H1 (cell line): ENCODE measurements at regions of chr4 and their contacts with region 1.

Region 1: GRCh38 chr4:186719925-186720694 is 3.5 kb downstream of the FAT1 start:
- DNase-seq: no peak
- H3K4me3 ChIP-seq: 0 out of 8 replicates have a peak overlapping the region, but pooled peaks of 1 of the 4 experiments have one; percentile 99
- H3K27ac ChIP-seq: no peak overlapping the region
- H3K4me1 ChIP-seq: peaks cover 0 to 16% (median 8%) of the 10 kb centered on the region in 4 experiments; a peak in 4 of 7 replicates
- H3K27me3 ChIP-seq: peaks cover 0 to 2% (median 0%) of the 10 kb centered on the region in 4 experiments; a peak in 2 of 7 replicates
- CTCF ChIP-seq: peak in 2 of 3 experiments; percentile 57 to 75; a peak in 2 of 4 replicates
- EP300 ChIP-seq: no peak
- POLR2A ChIP-seq: no peak
- RAD21 ChIP-seq: peak; percentile 85 to 88

Region 2: GRCh38 chr4:186669159-186669731 is 50.9 kb before region 1 on chr4:
- CTCF ChIA-PET with region 1: interaction called, 16 read pairs
- POLR2A ChIA-PET with region 1: no interaction called
- DNase-seq: peak in 1 of 2 experiments; percentile 64
- H3K4me3 ChIP-seq: peak overlapping the region; percentile 23 to 54 (median 34); a peak in 6 of 8 replicates
- H3K27ac ChIP-seq: no peak overlapping the region
- H3K4me1 ChIP-seq: peaks cover 2 to 21% (median 8%) of the 10 kb centered on the region in 4 experiments
- H3K27me3 ChIP-seq: peaks cover 0 to 1% (median 0%) of the 10 kb centered on the region in 4 experiments; a peak in 1 of 7 replicates
- CTCF ChIP-seq: peak in 1 of 3 experiments; percentile 19; a peak in 2 of 4 replicates
- EP300 ChIP-seq: no peak
- POLR2A ChIP-seq: no peak
- RAD21 ChIP-seq: no peak; a peak in 1 of 4 replicates

Region 3: GRCh38 chr4:186701273-186701672 is 18.8 kb before region 1 on chr4:
- CTCF ChIA-PET with region 1: interaction called, 21 read pairs
- POLR2A ChIA-PET with region 1: interaction called, 8 read pairs
- DNase-seq: peak in 1 of 2 experiments; percentile 64
- H3K4me3 ChIP-seq: peak overlapping the region in 2 of 4 experiments; percentile 7 to 23; a peak in 1 of 8 replicates
- H3K27ac ChIP-seq: no peak overlapping the region
- H3K4me1 ChIP-seq: peaks cover 12 to 34% (median 26%) of the 10 kb centered on the region in 4 experiments
- H3K27me3 ChIP-seq: no peaks in the 10 kb centered on the region
- CTCF ChIP-seq: no peak
- EP300 ChIP-seq: 0 out of 3 replicates have a peak, but pooled peaks of 1 of the 2 experiments have one; percentile 61
- POLR2A ChIP-seq: no peak
- RAD21 ChIP-seq: peak in 1 of 2 experiments; percentile 18; a peak in 2 of 4 replicates

Region 4: GRCh38 chr4:186709517-186709916 is 10.6 kb before region 1 on chr4:
- CTCF ChIA-PET with region 1: interaction called, 15 read pairs
- POLR2A ChIA-PET with region 1: interaction called, 4 read pairs
- DNase-seq: no peak
- H3K4me3 ChIP-seq: no peak overlapping the region
- H3K27ac ChIP-seq: no peak overlapping the region
- H3K4me1 ChIP-seq: peaks cover 0 to 11% (median 4%) of the 10 kb centered on the region in 4 experiments; a peak in 3 of 7 replicates
- H3K27me3 ChIP-seq: no peaks in the 10 kb centered on the region
- CTCF ChIP-seq: no peak
- EP300 ChIP-seq: no peak
- POLR2A ChIP-seq: no peak
- RAD21 ChIP-seq: no peak